Activated CD4-positive, alpha-beta T cell treated with anti-CD3 and anti-CD28 coated beads for 36 hours (primary cell): ENCODE measurements at regions of chr3 and their contacts with region 1.

Region 1: DNA sequence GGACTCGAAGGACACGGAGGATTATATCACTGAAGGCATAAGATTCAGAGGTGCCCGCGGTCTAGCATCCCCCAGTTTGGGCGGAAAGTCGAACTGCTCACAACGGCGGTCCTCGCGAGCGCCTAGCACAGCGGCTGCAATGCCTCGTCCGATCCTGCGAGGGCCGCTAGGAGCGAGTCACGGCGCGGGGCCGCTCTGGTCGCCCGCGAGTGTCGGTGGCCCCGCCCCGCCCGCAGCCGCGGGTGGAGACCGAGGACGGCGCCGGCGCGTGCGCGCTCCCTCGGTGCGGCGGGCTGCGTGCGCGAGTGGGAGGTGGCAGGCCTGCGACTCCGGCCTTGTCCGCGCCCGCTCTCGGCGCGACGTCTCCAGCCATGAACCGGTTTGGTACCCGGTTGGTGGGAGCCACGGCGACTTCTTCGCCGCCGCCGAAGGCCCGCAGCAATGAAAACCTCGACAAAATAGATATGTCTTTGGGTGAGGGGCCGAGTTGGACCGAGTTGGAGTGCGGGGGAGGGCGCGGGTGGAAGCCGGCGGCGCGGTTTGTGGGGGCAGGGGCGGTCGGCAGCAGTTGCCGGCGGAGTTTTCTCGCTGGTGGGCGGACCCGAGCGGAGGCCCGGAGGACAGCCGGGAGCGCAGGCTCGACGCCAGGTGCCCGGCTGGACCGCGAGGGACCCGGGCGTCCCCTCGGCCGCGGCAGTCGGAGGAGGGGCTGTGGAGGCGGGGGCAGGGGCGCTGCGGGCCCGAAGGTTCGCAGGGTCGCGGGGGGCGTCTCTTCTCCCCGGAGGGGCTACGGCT is at the start of gene FYTTD1:
- DNase-seq: peak; percentile 89
- ATAC-seq: peak; percentile 81
- H3K4me3 Mint-ChIP-seq: peak within 1 kb of the TSS; percentile 89
- H3K27ac Mint-ChIP-seq: peak within 1 kb of the TSS; percentile 87
- H3K4me1 Mint-ChIP-seq: peaks cover 37% of the 10 kb centered on the region
- H3K27me3 Mint-ChIP-seq: no peaks in the 10 kb centered on the region
- total RNA-seq, gene FYTTD1: 20.7 to 25.6 TPM

Region 2: DNA sequence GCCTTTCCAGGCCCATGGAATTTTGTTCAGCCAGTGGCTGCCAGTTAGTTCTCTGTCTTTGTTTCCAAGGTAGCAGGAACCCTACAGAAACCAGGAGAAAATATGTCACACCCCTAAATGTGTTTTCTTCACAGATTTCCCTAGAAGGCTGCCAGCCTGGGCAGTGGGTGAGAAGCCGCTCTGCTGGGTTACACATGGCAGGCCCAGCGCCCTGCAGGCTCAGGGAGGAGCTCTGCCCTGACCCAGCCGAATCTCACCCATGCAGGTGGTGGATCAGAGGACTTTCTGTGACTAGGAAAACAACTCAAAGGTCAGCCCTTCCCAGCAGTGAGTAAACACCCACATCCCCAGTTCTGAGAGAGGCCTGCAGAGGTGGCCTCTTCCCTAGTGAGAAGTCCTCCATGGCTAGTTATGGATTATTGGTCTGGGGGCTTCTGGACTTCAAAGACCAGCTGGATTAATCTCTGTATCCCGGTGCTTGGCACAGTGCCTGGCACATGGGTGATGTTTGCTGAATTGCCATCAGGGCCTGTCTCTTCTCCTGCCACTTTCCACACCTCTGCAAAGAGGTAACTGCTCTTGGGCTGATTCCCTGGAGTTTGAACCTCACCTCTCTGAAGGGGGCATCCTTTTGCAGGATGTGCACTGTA is 159.4 kb before region 1 on chr3:
- CTCF ChIA-PET with region 1: no interaction called
- POLR2A ChIA-PET with region 1: no interaction called
- intact Hi-C with region 1: no loop called
- DNase-seq: no peak
- ATAC-seq: no peak
- H3K4me3 Mint-ChIP-seq: no peak overlapping the region
- H3K27ac Mint-ChIP-seq: no peak overlapping the region
- H3K4me1 Mint-ChIP-seq: peaks cover 4% of the 10 kb centered on the region
- H3K27me3 Mint-ChIP-seq: no peaks in the 10 kb centered on the region

Region 3: GRCh38 chr3:197801891-197802778 is 52.3 kb after region 1 on chr3:
- CTCF ChIA-PET with region 1: interaction called, 3 read pairs
- POLR2A ChIA-PET with region 1: no interaction called
- intact Hi-C with region 1: loop called in 1 of 2 experiments (anchors 1 kb)
- DNase-seq: peak; percentile 48
- ATAC-seq: peak; percentile 65
- H3K4me3 Mint-ChIP-seq: no peak overlapping the region
- H3K27ac Mint-ChIP-seq: peak overlapping the region; percentile 9
- H3K4me1 Mint-ChIP-seq: peaks cover 52% of the 10 kb centered on the region
- H3K27me3 Mint-ChIP-seq: no peaks in the 10 kb centered on the region

Region 4: DNA sequence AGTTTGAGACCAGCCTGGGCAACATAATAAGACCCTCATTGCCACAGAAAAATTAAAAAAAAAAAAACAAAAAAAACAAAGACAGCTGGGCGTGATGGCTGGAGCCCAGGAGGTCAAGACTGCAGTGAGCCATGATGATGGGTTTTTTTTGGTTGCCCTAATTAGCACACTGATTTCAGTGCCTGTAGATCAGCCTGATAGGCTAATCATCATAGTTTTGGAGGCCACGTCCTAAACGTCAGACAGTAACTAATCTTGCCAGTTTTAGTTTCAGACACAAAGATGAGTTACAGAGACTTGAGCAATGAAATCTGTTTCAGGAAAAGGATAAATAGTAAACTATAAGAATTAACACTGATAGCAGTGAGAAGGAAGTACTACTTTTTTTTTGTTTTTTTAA is 96.7 kb after region 1 on chr3:
- CTCF ChIA-PET with region 1: no interaction called
- POLR2A ChIA-PET with region 1: no interaction called
- intact Hi-C with region 1: no loop called
- DNase-seq: no peak
- ATAC-seq: peak; percentile 19
- H3K4me3 Mint-ChIP-seq: no peak overlapping the region
- H3K27ac Mint-ChIP-seq: no peak overlapping the region
- H3K4me1 Mint-ChIP-seq: peaks cover 29% of the 10 kb centered on the region
- H3K27me3 Mint-ChIP-seq: no peaks in the 10 kb centered on the region

Region 5: GRCh38 chr3:197949754-197950660 is 200.2 kb after region 1 on chr3 and contains the start of gene RPL35A:
- CTCF ChIA-PET with region 1: no interaction called
- POLR2A ChIA-PET with region 1: interaction called, 5 read pairs
- intact Hi-C with region 1: loop called in 1 of 2 experiments (anchors 2 kb)
- DNase-seq: peak; percentile 90
- ATAC-seq: peak; percentile 89
- H3K4me3 Mint-ChIP-seq: peak within 1 kb of the TSS; percentile 87
- H3K27ac Mint-ChIP-seq: peak within 1 kb of the TSS; percentile 97
- H3K4me1 Mint-ChIP-seq: peaks cover 47% of the 10 kb centered on the region
- H3K27me3 Mint-ChIP-seq: no peaks in the 10 kb centered on the region
- total RNA-seq, gene RPL35A: 1,121 to 1,734 TPM